MCF 10A (cell line): ENCODE measurements at regions of chr4 and their contacts with region 1.

Region 1: DNA sequence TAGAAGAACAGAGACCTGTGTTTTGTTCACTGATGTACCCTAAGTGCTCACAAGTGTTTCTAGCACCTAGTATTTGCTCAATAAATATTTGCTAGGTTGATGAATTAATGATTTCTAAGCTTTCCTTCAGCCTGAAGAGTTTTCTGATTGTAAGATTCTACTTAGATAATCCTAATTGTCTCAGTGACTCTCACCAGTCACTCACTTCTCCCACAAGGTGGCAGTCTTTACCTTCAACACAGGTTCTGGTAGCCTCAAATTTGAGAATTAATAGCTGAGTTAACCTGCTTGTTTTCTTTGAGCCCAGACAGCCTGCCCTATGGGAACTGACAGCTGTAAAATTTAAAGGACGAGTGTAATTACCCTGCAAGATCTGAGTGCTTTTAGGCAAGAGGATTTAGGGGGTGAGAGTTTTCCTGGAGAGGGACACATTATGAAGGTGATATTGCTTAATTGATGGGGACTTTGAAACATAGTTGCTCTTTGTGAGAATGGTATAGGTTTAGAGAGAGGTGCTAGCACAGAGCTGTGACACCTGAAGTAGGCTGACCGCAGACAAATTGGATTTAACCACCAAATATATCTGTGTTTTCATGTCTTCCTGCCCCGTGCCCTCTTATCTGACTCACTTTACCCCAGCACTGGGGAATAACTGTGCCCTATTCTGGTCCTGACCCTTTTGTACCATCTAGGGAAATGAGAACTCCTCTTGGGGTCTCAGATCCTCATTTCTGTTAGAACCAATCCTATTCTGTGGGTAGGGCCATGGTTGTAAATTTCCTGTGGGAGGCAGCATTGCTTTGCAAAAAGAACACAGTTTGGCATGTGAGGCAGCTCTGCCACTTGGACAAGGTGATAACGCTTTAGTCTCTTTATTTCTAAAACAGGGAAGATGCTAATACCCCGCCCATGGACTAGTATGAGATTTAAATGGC is 27.7 kb downstream of the CD38 start:
- DNase-seq: peak; percentile 80
- H3K4me3 Mint-ChIP-seq: no peak overlapping the region
- H3K27ac Mint-ChIP-seq: no peak overlapping the region
- H3K4me1 Mint-ChIP-seq: peaks cover 5% of the 10 kb centered on the region
- H3K27me3 Mint-ChIP-seq: peaks cover 43% of the 10 kb centered on the region
- CTCF ChIP-seq: peak; percentile 67

Region 2: DNA sequence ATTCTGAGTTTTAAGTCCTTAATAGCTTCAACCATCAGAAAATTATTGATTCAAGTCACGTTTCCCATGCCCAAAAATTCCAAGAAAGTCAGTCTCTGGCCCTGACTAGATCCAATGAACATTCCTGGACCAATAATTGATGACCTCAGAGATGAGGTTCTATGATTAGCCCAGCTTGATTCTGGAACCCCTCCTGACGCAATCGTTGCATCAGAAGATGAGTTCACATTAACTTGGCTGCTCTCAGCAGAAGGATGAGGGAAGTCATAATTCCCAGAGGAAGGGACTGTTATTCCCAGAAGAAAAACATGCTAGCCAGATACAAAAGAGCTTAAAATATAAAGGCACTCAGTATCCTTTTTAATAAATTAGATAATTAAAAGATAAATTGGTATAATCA is 837.9 kb before region 1 on chr4:
- CTCF ChIA-PET with region 1: no interaction called
- POLR2A ChIA-PET with region 1: no interaction called
- intact Hi-C with region 1: no loop called
- DNase-seq: peak; percentile 6
- H3K4me3 Mint-ChIP-seq: no peak overlapping the region
- H3K27ac Mint-ChIP-seq: no peak overlapping the region
- H3K4me1 Mint-ChIP-seq: no peaks in the 10 kb centered on the region
- H3K27me3 Mint-ChIP-seq: no peaks in the 10 kb centered on the region
- CTCF ChIP-seq: no peak

Region 3: DNA sequence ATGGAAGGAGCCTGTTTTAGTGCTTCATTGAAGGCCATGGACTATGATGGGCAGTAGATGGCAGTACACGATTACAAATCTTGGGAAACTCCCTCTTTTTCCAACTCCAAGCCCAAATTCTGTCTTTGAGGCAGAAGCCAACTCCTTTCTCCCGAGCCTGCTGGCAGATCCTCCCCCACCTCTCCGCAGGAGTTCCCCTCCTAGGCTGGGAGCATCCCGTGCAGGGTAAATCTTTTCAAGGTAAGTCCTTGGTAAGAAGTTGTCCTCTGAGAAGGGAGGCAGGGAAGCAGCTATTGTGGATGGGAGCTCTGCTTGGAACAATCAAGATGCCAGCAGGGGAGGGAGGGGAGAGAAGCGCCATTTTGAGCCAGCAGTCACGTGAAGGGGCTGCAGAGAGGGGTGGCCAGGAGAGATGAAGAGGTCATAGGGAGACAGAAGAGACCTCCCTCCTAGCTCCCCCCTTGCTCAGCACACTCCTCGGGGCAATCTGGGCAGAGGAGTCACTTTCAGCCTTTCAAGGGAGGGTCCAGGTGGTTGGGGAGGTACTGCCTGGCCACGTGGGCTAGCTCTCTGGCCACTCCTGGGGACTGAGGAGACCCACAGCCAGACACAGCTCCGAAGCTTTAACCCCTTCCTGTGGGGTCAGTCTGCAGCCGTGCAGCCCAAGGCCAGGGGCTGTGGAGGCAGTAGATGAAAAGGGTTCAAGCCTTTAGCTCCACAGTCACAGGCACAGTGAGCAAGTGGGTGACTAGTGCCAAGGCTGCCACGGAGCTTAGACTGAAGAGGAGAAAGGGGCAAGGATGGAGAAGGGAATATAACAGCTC is 326.5 kb before region 1 on chr4:
- CTCF ChIA-PET with region 1: interaction called, 17 read pairs
- POLR2A ChIA-PET with region 1: interaction called, 3 read pairs
- intact Hi-C with region 1: loop called (anchors 1 kb)
- DNase-seq: peak; percentile 87
- H3K4me3 Mint-ChIP-seq: peak overlapping the region; percentile 76
- H3K27ac Mint-ChIP-seq: peak overlapping the region; percentile 59
- H3K4me1 Mint-ChIP-seq: peaks cover 13% of the 10 kb centered on the region
- H3K27me3 Mint-ChIP-seq: no peaks in the 10 kb centered on the region
- CTCF ChIP-seq: peak; percentile 63

Region 4: DNA sequence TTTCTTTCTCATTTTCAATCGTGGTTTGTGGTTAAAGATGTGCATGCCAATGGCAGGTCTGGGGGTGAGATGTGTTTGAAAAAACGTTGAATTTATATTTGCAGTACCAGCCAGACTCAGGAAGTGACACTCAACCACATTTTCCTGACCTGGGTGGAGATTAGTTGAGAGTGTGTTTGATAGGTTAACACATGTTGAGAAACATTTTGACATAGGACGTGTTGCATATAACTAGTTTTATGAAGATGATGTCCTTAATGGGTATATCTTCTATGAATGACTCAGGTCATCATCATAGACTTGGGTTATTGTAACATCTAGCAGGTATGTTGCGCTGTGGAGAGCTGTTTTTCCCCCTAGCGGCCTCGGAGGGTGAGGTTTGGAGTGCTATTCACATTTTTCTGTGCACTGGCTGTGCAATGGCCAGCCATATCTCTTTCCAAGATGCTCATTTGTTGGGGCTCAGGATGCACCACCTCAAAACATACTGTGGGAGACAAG is 49.4 kb before region 1 on chr4:
- CTCF ChIA-PET with region 1: interaction called, 11 read pairs
- POLR2A ChIA-PET with region 1: no interaction called
- intact Hi-C with region 1: no loop called
- DNase-seq: peak; percentile 82
- H3K4me3 Mint-ChIP-seq: no peak overlapping the region
- H3K27ac Mint-ChIP-seq: no peak overlapping the region
- H3K4me1 Mint-ChIP-seq: peaks cover 5% of the 10 kb centered on the region
- H3K27me3 Mint-ChIP-seq: no peaks in the 10 kb centered on the region
- CTCF ChIP-seq: peak; percentile 50

Region 5: DNA sequence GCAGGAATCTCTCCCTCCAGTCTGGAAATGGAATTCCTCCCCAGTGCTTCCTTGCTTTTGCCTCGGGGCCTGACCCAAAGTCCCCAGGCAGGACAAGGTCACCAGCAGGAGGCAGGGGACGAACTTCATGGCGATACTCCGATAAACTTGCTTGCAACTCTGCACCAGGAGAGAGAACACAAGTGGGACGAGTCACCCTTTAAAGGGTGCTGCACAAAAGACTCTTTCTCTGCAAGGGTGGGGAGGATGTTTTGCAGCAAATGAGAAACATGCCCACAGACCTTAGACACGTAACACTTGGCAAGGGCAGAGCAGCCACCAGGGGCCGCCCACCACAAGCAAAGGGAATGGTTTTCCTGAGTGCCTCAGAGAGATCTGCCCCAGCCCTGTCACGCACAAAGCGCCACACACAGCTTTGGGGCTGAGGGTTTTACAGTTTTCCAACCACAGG is 157.2 kb after region 1 on chr4 and contains the start of gene FGFBP2:
- CTCF ChIA-PET with region 1: interaction called, 20 read pairs
- POLR2A ChIA-PET with region 1: no interaction called
- intact Hi-C with region 1: no loop called
- DNase-seq: peak; percentile 44
- H3K4me3 Mint-ChIP-seq: no peak within 1 kb of the TSS
- H3K27ac Mint-ChIP-seq: no peak within 1 kb of the TSS
- H3K4me1 Mint-ChIP-seq: no peaks in the 10 kb centered on the region
- H3K27me3 Mint-ChIP-seq: peaks cover 17% of the 10 kb centered on the region
- CTCF ChIP-seq: peak; percentile 18
- total RNA-seq, gene FGFBP2: not detected in 2 replicates

Region 6: GRCh38 chr4:16026160-16026761 is 220.4 kb after region 1 on chr4:
- CTCF ChIA-PET with region 1: interaction called, 10 read pairs
- POLR2A ChIA-PET with region 1: no interaction called
- intact Hi-C with region 1: no loop called
- DNase-seq: peak; percentile 65
- H3K4me3 Mint-ChIP-seq: no peak overlapping the region
- H3K27ac Mint-ChIP-seq: no peak overlapping the region
- H3K4me1 Mint-ChIP-seq: peaks cover 6% of the 10 kb centered on the region
- H3K27me3 Mint-ChIP-seq: no peaks in the 10 kb centered on the region
- CTCF ChIP-seq: peak; percentile 72

Region 7: GRCh38 chr4:16264798-16265197 is 458.9 kb after region 1 on chr4:
- CTCF ChIA-PET with region 1: interaction called, 4 read pairs
- POLR2A ChIA-PET with region 1: no interaction called
- intact Hi-C with region 1: loop called (anchors 5 kb)
- DNase-seq: peak; percentile 51
- H3K4me3 Mint-ChIP-seq: no peak overlapping the region
- H3K27ac Mint-ChIP-seq: no peak overlapping the region
- H3K4me1 Mint-ChIP-seq: no peaks in the 10 kb centered on the region
- H3K27me3 Mint-ChIP-seq: no peaks in the 10 kb centered on the region
- CTCF ChIP-seq: peak; percentile 37